ENCODE measurements at regions of chr10 and their contacts with region 1.

Region 1: GRCh38 chr10:70925377-70926225 is 37.2 kb upstream of the PCBD1 start:
- DNase-seq: peak; percentile 55
- H3K4me3 ChIP-seq: no peak overlapping the region
- H3K27ac ChIP-seq: no peak overlapping the region
- H3K4me1 ChIP-seq: peaks cover 7% of the 10 kb centered on the region
- H3K27me3 ChIP-seq: no peaks in the 10 kb centered on the region
- CTCF ChIP-seq: peak; percentile 93

Region 2: DNA sequence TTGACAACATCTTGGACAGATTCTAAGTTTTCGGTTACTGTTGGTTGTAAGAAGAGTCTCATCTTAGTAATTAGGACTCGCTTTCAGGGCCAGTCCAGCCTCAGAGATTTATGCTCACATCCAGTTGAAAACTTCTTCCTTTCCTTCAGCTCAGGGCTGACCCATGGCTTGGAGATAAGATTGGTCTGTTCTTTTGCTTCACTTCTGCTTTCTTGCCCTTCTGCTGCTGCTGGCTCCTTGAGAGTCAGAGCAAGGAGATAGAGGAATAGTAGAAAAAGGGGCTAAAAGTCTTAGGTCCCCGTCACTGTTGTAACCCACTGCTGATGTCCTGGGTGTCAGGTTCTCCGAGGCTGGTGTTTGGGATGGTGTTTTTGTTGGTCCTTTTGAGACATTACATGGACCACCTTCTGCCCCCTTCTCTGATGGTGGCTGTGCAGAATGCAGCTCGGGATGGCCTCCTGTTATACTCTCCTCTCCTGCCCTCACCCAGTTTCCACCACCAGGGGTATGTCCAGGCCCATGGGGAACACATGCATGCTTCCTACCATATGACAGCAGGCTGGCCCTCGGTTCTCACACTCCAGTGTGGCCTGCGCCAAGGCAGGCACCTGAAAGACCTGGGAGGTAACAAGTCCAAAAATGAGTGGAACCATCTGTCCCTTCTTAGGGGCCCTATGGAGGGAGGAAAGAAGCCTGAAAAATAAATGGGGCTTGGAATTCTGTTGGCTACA is 30.6 kb after region 1 on chr10:
- CTCF ChIA-PET with region 1: no interaction called
- POLR2A ChIA-PET with region 1: no interaction called
- intact Hi-C with region 1: no loop called
- DNase-seq: peak; percentile 9
- H3K4me3 ChIP-seq: no peak overlapping the region
- H3K27ac ChIP-seq: no peak overlapping the region
- H3K4me1 ChIP-seq: no peaks in the 10 kb centered on the region
- H3K27me3 ChIP-seq: no peaks in the 10 kb centered on the region
- CTCF ChIP-seq: peak; percentile 16; the same call in 1 of the 2 replicates

Region 3: GRCh38 chr10:71209352-71209715 is 283.7 kb after region 1 on chr10:
- CTCF ChIA-PET with region 1: interaction called, 5 read pairs
- POLR2A ChIA-PET with region 1: no interaction called
- intact Hi-C with region 1: loop called (anchors 1 kb)
- DNase-seq: no peak
- H3K4me3 ChIP-seq: no peak overlapping the region
- H3K27ac ChIP-seq: no peak overlapping the region
- H3K4me1 ChIP-seq: peaks cover 17% of the 10 kb centered on the region
- H3K27me3 ChIP-seq: no peaks in the 10 kb centered on the region
- CTCF ChIP-seq: no peak

Measured in A673 (cell line).